Activated naive CD4-positive, alpha-beta T cell treated with anti-CD3 and anti-CD28 coated beads, Interleukin-2, amount 10 ng/mL, durations not matched to agents 7 days and 5 days (primary cell): ENCODE measurements at regions of chr17 and their contacts with region 1.

Region 1: GRCh38 chr17:8109661-8110464 is 8.5 kb downstream of the ALOXE3 start:
- DNase-seq: peak; percentile 86
- H3K4me3 Mint-ChIP-seq: no peak overlapping the region
- H3K27ac Mint-ChIP-seq: no peak overlapping the region
- H3K4me1 Mint-ChIP-seq: peaks cover 2% of the 10 kb centered on the region
- H3K27me3 Mint-ChIP-seq: peaks cover 83% of the 10 kb centered on the region

Region 2: GRCh38 chr17:7825206-7825990 is 284.5 kb before region 1 on chr17:
- CTCF ChIA-PET with region 1: no interaction called
- DNase-seq: no peak
- H3K4me3 Mint-ChIP-seq: no peak overlapping the region
- H3K27ac Mint-ChIP-seq: no peak overlapping the region
- H3K4me1 Mint-ChIP-seq: no peaks in the 10 kb centered on the region
- H3K27me3 Mint-ChIP-seq: peaks cover 50% of the 10 kb centered on the region

Region 3: DNA sequence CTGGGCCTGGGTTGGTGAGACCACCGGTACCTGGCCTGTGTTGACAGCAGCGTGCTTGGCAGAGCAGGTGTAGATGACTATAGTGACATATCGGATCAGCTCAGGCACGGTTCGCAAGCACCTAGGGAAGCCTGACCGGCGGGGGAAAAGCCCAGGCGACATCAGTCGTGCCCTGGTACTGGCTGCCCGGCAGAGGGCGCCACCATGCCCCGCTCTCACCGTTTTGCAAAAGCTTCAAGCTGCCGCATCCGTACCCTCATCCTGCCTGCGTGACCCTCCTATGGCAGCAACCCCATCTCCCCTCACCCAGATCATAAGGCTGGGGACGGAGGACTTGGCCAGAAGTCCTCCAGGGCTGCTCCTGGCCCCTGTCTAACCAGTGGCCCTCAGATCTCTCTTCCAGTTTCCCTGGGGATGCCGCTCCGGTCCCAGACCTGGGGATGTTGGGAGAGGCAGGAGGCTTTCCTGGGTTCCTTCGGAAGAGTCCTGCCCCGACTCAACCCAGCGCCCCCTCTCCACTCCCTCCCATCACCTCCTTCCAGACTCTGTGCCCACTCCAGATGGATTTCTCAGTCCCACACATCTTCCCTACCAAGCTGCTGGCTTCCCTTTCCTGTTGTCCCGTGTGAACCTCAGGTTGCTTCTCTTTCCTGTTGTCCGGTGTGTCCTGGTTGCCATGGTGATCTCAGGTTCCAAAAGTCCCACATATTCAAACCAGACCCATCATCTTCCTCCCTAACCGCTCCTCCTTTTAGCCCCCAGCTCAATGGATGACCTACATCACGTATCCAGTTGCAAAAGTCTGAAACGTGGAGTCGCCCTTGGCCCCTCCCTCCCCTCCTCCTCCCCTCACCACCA is 36.0 kb before region 1 on chr17:
- CTCF ChIA-PET with region 1: interaction called, 42 read pairs
- DNase-seq: peak; percentile 89
- H3K4me3 Mint-ChIP-seq: peak overlapping the region; percentile 65
- H3K27ac Mint-ChIP-seq: peak overlapping the region; percentile 21
- H3K4me1 Mint-ChIP-seq: peaks cover 30% of the 10 kb centered on the region
- H3K27me3 Mint-ChIP-seq: peaks cover 89% of the 10 kb centered on the region

Region 4: DNA sequence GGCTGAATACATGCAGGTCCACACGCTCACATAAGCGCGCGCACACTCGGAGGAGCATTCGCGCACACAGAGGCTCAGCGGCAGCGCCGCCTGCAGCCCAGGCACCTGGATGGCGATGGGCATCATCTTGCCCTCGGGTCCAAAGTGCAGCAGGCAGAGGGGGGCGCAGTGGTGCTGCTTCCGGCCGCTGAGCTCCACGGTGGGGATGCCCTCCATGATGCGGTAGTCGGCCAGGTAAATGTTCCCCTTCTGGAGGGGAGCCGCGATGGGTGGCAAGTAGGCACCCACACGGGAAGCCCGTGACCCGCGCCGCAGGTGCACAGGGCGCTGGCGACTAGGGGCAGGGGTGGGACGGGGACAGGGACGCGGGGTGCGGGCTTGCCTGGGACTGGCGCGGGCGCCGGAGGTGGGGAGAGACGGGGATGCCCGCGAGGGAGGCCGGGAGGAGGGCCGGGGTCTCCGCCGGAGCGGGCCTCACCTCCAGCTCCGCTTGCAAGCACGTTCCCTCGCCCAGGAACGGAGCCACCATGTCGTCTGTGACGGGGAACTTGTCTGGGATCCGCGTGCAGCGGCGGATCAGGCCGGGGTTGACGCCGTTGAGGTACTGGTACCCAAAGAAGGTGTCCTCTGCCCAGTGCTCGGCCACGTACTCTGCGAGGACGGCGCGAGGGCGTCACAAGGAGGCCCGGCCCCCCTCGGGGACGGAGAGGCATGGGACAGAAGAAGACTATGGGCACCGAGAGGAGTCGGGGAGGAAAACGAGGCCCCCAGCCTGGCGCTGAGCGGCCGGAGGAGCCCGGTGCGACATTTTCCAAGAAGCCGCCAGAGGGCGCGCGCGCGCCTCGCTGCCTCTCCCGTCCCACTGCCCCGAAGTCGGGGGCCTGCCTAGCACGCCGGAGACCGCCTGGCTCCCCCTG is 30.3 kb before region 1 on chr17:
- CTCF ChIA-PET with region 1: interaction called, 42 read pairs
- DNase-seq: peak; percentile 81
- H3K4me3 Mint-ChIP-seq: peak overlapping the region; percentile 83
- H3K27ac Mint-ChIP-seq: peak overlapping the region; percentile 73
- H3K4me1 Mint-ChIP-seq: peaks cover 17% of the 10 kb centered on the region
- H3K27me3 Mint-ChIP-seq: peaks cover 35% of the 10 kb centered on the region

Region 5: DNA sequence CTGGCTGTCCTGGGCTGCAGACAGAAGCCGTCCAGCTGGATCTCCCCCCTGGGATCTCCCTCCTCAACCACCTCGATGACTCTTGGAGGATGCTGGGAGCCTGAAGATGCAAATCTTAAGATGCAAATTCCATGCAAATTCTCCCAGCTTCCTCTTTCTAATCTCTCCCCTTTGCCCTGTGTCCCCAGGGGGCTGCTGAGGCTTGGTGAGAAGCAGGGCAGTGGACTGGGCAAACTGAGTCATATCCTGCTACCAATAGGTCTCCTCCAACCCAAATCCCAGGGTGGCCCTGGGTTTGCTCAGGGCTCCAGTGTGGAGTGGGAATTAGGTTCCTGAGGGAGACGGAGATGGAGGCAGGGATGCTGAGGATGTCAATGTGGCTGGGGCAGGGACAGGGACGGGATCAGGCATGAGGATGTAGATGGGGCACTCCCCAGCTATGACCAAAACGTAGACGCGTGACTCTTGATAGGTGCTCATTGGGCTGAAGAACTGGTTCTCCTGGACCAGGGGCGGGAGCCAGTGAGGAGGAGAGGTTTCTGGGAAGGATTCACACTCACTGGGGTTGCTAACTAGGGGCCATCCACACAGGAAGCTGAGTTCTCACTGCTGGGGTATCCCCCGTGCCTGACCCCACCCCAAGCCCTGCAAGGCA is 18.7 kb before region 1 on chr17:
- CTCF ChIA-PET with region 1: interaction called, 85 read pairs
- DNase-seq: no peak
- H3K4me3 Mint-ChIP-seq: no peak overlapping the region
- H3K27ac Mint-ChIP-seq: no peak overlapping the region
- H3K4me1 Mint-ChIP-seq: peaks cover 20% of the 10 kb centered on the region
- H3K27me3 Mint-ChIP-seq: peaks cover 92% of the 10 kb centered on the region